ENCODE measurements at regions of chr12 and their contacts with region 1.

Region 1: GRCh38 chr12:55973598-55974307 is at the start of gene RAB5B:
- DNase-seq: peak; percentile 100
- H3K4me3 ChIP-seq: peak within 1 kb of the TSS; percentile 94 to 98 (median 96)
- H3K27ac ChIP-seq: peak within 1 kb of the TSS; percentile 95
- H3K4me1 ChIP-seq: peaks cover 17% of the 10 kb centered on the region
- H3K27me3 ChIP-seq: no peaks in the 10 kb centered on the region
- CTCF ChIP-seq: no peak
- total RNA-seq, gene RAB5B: 79.4 to 92.5 TPM

Region 2: DNA sequence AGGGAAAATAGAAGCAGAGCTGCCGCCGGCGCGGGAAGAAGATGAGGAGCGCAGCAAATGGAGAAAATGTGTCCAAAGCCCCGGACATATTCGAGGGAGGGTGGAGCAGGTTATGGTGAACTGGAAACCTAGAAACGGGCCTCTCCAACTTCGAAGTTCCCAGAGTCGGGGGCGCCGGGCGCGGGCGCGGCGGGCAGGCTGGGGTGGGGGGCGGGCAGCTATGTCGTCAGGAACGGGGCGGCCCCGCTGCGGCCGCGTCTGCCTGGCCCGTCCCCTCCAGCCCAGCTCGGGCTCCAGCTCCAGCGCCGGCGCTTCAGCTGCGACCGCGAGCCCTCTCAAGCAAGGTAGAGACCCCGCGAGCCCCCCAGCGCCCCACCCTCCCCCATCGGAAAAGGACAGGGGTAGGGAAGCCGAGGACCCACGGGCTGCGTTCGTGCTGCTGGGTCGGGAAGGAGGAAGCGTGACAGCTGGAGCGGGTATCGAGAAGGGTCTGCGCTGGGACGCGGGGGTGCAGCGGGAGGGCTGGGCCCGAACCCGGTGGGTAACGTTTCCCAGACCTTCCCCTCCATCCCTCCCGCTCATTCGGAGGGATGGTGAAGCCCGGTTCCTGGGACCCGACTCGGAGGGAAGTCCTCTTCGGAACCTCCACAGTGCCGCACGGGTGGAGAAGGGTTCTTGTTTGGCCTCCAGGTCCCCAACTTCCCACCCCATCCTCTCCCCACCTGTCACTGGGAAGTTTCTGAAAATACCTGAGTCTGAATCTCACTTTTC is 41.8 kb before region 1 on chr12:
- CTCF ChIA-PET with region 1: no interaction called
- dilution Hi-C with region 1: no loop called
- in situ Hi-C with region 1: no loop called
- intact Hi-C with region 1: loop called (anchors 1 kb)
- DNase-seq: no peak
- H3K4me3 ChIP-seq: peak overlapping the region; percentile 63 to 95 (median 92)
- H3K27ac ChIP-seq: peak overlapping the region; percentile 95
- H3K4me1 ChIP-seq: peaks cover 67% of the 10 kb centered on the region
- H3K27me3 ChIP-seq: no peaks in the 10 kb centered on the region
- CTCF ChIP-seq: no peak

Region 3: DNA sequence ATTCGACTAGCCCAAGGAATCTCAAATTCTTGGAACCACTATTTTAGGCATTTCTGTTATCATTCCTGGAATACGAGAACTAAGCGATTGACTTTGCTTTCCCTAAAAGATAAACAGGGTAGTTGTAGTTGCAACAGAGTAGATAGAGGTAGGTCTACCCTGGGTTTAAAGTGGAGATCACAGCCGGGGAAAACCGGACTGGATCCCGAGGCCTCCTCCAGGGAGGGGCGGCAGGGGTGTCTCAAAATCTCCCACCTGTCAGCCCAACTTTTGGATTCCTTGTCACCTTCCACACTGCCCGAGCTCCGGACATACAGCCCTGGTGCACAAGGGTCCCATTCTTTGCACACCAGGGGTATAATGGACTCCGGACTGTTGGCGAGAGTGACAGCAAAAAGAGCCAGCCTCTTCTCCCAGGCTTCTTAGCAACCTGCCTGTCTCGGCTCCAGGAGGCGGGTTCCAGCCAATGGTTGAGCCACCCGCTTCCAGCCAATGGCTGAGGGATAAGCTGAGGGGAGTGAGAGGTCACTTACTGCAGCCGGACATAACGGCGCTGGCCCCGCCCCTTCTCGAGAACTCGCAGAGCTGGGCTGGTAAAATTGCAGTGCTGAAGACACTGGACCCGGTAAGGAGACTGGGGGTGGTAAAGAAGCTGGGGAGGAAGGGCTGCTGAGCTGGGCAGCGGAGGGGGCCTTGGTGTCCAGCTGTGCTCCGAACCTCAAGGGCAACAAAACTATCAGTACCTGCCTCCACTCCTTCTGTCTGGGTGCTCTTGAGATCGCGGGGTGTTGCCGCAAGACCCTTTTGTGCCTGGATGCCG is 23.2 kb after region 1 on chr12 and contains the start of gene SUOX:
- CTCF ChIA-PET with region 1: interaction called, 10 read pairs
- dilution Hi-C with region 1: no loop called
- in situ Hi-C with region 1: no loop called
- intact Hi-C with region 1: no loop called
- DNase-seq: peak; percentile 96
- H3K4me3 ChIP-seq: peak within 1 kb of the TSS; percentile 67 to 82 (median 75)
- H3K27ac ChIP-seq: peak within 1 kb of the TSS; percentile 63
- H3K4me1 ChIP-seq: peaks cover 11% of the 10 kb centered on the region
- H3K27me3 ChIP-seq: no peaks in the 10 kb centered on the region
- CTCF ChIP-seq: no peak
- total RNA-seq, gene SUOX: 10.7 to 14.7 TPM